MCF 10A (cell line): ENCODE measurements at regions of chr1 and their contacts with region 1.

Region 1: DNA sequence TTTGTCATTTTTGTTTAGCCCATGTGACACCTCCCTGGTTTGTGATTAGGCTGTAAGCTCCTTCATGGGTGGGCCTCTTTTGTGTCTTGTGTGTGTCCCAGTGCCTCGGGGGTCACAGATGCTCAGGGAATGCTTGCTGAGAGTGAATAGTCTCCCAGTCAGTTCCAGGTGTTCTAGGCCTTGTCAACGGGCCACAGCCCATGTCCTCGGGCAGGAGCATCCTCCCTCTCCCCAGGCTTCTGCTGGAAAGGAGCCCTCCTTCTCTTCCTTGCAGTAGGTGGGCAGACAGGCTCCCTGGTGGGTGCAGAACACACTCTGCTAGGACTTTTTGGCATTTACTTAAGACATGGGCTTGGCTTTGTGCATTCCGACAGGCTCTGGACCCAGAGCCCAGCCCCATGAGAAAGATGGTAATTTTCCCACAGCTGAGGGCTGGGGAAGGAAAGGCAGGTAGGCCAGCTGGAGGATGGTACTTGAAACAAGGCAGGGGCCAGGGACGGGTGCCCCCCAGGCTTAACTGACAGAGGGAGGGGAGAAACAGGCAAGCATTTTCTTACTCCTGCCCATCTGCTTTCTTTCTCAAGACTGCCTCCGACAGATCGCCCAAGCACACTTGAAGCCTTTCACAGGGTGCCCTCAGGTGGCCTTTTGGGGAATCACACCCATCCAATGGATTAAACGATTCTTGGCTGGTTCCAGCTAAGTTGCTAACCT is 7.1 kb upstream of the CPLANE2 start:
- DNase-seq: peak; percentile 85
- H3K4me3 Mint-ChIP-seq: no peak overlapping the region
- H3K27ac Mint-ChIP-seq: peak overlapping the region; percentile 27
- H3K4me1 Mint-ChIP-seq: peaks cover 17% of the 10 kb centered on the region
- H3K27me3 Mint-ChIP-seq: no peaks in the 10 kb centered on the region
- CTCF ChIP-seq: peak; percentile 77

Region 2: DNA sequence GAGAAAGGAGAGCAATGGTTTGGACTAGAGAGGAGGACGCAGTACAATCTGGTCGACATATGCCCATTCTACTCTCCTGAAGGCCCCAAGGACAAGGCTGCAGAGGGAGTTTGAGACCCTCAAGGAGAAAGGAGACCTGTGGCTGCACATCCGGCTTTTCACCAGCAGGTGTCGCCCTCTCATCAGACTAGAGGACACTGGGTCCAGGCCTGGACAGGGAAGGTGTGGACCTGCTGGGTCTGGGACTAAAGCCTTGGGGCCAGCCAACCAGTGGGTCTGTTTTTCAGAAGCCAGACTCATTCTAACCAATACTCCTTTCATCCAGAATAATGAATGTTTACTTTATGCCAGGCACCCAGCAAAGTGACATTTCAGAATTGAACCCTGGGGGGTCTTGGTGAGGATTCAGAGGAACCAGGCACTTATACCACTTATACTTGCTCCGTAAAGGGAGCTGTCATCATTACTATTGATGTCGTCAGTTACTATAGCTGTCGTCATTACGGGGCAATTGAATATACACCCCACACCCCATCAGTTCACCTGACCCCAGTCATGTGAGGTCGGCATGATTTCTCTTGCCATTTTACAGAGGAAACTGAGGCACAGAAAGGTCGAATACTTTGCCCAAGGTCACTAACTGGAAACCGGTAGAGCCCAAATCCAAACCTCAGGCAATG is 234.9 kb before region 1 on chr1:
- CTCF ChIA-PET with region 1: interaction called, 4 read pairs
- POLR2A ChIA-PET with region 1: interaction called, 3 read pairs
- intact Hi-C with region 1: loop called (anchors 10 kb)
- DNase-seq: peak; percentile 81
- H3K4me3 Mint-ChIP-seq: no peak overlapping the region
- H3K27ac Mint-ChIP-seq: no peak overlapping the region
- H3K4me1 Mint-ChIP-seq: peaks cover 15% of the 10 kb centered on the region
- H3K27me3 Mint-ChIP-seq: no peaks in the 10 kb centered on the region
- CTCF ChIP-seq: peak; percentile 97

Region 3: GRCh38 chr1:16073490-16074119 is 170.5 kb before region 1 on chr1 and contains the start of gene FAM131C:
- CTCF ChIA-PET with region 1: interaction called, 79 read pairs
- POLR2A ChIA-PET with region 1: interaction called, 12 read pairs
- intact Hi-C with region 1: no loop called
- DNase-seq: peak; percentile 27
- H3K4me3 Mint-ChIP-seq: peak within 1 kb of the TSS; percentile 48
- H3K27ac Mint-ChIP-seq: no peak within 1 kb of the TSS
- H3K4me1 Mint-ChIP-seq: peaks cover 37% of the 10 kb centered on the region
- H3K27me3 Mint-ChIP-seq: no peaks in the 10 kb centered on the region
- CTCF ChIP-seq: peak; percentile 50
- total RNA-seq, gene FAM131C: 0.20 TPM in 1 of 2 replicates, not detected in the other

Region 4: DNA sequence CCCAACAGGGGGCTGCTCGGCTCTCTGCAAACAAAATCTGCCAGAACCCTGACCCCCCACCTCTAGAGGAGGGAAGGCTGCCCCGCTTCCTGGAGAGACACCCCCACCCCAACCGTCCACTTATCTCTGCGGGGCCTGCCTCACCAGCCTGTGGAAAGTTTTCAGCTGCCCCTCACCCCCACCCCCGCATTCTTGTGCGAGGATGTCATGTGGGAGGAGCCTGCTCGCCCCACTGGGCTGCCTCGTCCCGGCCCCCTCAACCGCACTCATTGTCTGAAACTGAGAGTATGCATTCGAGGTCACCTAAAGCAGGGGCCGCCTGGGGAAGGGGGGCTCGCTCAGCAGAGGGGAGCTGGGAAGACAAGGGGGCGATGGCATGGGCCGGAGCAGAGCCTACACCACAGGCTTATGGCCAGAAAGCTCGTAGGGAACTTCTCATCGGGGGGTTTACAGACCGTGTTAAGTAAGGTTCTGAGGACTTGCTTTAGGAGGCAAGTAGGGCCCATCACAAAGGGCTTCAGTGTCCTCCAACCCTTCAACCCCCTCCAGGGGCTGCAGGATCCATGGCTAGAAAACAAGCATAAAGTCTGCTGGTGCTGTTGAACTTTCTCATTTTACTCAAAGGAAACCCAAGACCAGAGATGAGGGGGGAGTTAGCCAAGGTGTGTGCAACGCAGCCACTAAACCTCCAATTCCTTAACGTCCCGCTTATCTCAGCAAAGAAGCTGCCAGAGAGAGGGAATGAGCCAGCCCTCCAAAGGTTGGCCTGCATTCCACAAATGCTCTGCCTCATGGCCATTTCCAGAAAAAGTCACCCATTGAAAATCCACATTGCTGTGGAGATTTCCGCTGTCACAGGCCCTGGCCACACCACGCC is 97.6 kb before region 1 on chr1:
- CTCF ChIA-PET with region 1: no interaction called
- POLR2A ChIA-PET with region 1: interaction called, 4 read pairs
- intact Hi-C with region 1: loop called (anchors 10 kb)
- DNase-seq: peak; percentile 80
- H3K4me3 Mint-ChIP-seq: peak overlapping the region; percentile 69
- H3K27ac Mint-ChIP-seq: peak overlapping the region; percentile 53
- H3K4me1 Mint-ChIP-seq: peaks cover 57% of the 10 kb centered on the region
- H3K27me3 Mint-ChIP-seq: no peaks in the 10 kb centered on the region
- CTCF ChIP-seq: no peak

Region 5: GRCh38 chr1:16187748-16188401 is 56.2 kb before region 1 on chr1:
- CTCF ChIA-PET with region 1: interaction called, 15 read pairs
- POLR2A ChIA-PET with region 1: interaction called, 4 read pairs
- intact Hi-C with region 1: loop called (anchors 2 kb)
- DNase-seq: peak; percentile 82
- H3K4me3 Mint-ChIP-seq: no peak overlapping the region
- H3K27ac Mint-ChIP-seq: no peak overlapping the region
- H3K4me1 Mint-ChIP-seq: peaks cover 38% of the 10 kb centered on the region
- H3K27me3 Mint-ChIP-seq: no peaks in the 10 kb centered on the region
- CTCF ChIP-seq: peak; percentile 98

Region 6: DNA sequence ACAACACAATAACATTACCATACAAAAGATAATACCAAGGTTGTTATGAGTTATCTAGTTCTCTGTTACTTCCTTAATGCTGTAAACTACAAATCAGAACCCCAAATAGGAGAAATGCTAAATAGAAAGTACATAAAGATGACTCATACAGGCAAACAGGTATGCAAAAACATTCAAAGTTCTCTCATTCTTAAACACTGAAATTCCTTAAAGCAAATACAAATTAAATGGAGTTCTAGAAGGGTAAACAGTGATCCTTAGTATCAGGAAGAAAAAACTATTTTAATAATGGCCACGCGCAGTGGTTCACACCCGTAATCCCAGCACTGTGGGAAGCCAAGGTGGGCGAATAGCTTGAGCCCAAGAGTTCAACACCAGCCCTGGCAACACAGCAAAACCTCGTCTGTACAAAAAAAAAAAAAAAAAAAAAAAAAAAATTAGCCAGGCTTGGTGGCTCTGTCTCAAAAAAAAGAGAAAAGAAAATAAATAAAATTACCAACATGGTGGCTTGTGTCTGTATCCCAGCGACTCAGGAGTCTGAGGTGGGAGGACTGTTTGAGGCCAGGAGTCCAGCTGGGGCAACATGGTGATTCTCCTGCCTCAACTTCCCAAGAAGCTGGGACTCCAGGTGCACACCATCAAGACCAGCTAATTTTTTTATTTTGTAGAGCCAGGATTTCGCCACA is 90.7 kb after region 1 on chr1:
- CTCF ChIA-PET with region 1: no interaction called
- POLR2A ChIA-PET with region 1: no interaction called
- intact Hi-C with region 1: no loop called
- DNase-seq: no peak
- H3K4me3 Mint-ChIP-seq: no peak overlapping the region
- H3K27ac Mint-ChIP-seq: no peak overlapping the region
- H3K4me1 Mint-ChIP-seq: peaks cover 13% of the 10 kb centered on the region
- H3K27me3 Mint-ChIP-seq: no peaks in the 10 kb centered on the region
- CTCF ChIP-seq: no peak

Region 7: GRCh38 chr1:16351994-16352841 is 108.1 kb after region 1 on chr1 and contains the start of gene FBXO42:
- CTCF ChIA-PET with region 1: interaction called, 6 read pairs
- POLR2A ChIA-PET with region 1: interaction called, 13 read pairs
- intact Hi-C with region 1: no loop called
- DNase-seq: peak; percentile 89
- H3K4me3 Mint-ChIP-seq: peak within 1 kb of the TSS; percentile 87
- H3K27ac Mint-ChIP-seq: peak within 1 kb of the TSS; percentile 84
- H3K4me1 Mint-ChIP-seq: peaks cover 16% of the 10 kb centered on the region
- H3K27me3 Mint-ChIP-seq: no peaks in the 10 kb centered on the region
- CTCF ChIP-seq: peak; percentile 29
- total RNA-seq, gene FBXO42: 21.9 and 24.9 TPM in 2 replicates

Region 8: DNA sequence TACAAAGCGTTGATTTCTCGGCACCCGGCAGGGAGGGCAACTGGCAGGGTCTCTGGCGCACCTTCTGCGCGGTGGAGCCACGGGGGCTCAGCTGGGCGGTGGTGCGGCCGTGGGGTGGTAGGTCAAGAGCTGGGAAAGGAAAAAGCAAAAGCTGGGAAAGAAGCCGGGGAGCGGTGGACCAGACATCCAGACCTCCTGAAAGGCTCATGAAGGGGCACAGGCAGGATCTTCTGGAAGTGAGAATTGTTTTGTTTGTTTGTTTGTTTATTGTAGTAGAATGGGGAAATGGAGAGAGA is 277.1 kb after region 1 on chr1:
- CTCF ChIA-PET with region 1: no interaction called
- POLR2A ChIA-PET with region 1: no interaction called
- intact Hi-C with region 1: no loop called
- DNase-seq: no peak
- H3K4me3 Mint-ChIP-seq: no peak overlapping the region
- H3K27ac Mint-ChIP-seq: no peak overlapping the region
- H3K4me1 Mint-ChIP-seq: no peaks in the 10 kb centered on the region
- H3K27me3 Mint-ChIP-seq: peaks cover 39% of the 10 kb centered on the region
- CTCF ChIP-seq: no peak